ENCODE measurements at regions of chr6 and their contacts with region 1.

Region 1: GRCh38 chr6:165659945-165660862 is 2.8 kb downstream of the PDE10A start:
- DNase-seq: no peak
- H3K4me3 Mint-ChIP-seq: no peak overlapping the region
- H3K27ac Mint-ChIP-seq: no peak overlapping the region
- H3K4me1 Mint-ChIP-seq: no peaks in the 10 kb centered on the region
- H3K27me3 Mint-ChIP-seq: peaks cover 33% of the 10 kb centered on the region

Region 2: GRCh38 chr6:165649166-165650137 is 10.8 kb before region 1 on chr6:
- CTCF ChIA-PET with region 1: no interaction called
- POLR2A ChIA-PET with region 1: no interaction called
- intact Hi-C with region 1: loop called (anchors 1 kb)
- DNase-seq: no peak
- H3K4me3 Mint-ChIP-seq: no peak overlapping the region
- H3K27ac Mint-ChIP-seq: no peak overlapping the region
- H3K4me1 Mint-ChIP-seq: no peaks in the 10 kb centered on the region
- H3K27me3 Mint-ChIP-seq: peaks cover 2% of the 10 kb centered on the region

Region 3: DNA sequence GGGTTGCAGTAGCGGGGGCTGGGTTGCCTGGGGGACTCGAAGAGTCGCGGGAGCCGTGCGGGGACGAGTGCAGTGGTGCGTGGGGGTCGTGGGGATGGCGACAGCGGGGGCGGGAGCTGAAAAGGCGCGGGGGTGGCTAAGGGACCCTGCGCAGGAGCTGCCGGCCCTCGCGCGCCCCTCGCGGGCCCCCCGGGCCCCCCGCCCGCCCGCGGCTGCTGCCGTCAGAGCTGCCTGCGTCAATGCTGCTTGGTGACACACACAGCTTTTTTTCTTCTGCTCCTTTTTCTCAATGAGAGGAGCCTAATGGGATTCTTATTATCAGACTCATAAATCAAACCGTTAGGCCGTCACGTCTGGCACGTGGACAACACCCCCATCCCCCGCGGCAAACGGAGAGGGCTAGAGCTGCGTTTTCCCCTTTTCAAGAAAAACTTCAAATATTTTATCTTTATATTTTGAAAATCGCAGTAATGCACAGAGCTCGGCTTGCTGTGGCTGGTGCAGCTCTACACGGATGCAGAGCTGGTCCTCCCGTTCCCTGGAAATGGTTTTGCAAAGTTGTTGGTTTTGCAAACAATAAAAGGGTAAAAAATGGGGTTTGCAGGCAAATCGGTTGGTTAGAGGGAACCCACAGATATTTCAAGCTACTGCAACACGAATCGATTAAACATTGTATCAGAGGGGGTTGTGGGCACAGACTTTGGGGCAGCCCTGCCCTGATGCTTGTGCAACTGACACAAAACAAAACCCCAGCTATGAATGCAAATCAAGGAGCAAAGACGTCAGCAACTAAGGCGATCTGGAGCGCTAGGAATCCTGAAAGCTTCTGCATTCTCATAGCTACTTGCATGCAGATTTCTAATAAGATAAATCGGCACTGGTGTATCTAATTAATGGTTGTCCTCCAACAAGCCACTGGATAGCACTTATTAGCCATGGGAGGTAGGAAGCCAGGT is 346.0 kb after region 1 on chr6:
- CTCF ChIA-PET with region 1: no interaction called
- POLR2A ChIA-PET with region 1: no interaction called
- intact Hi-C with region 1: loop called (anchors 5 kb)
- DNase-seq: no peak
- H3K4me3 Mint-ChIP-seq: no peak overlapping the region
- H3K27ac Mint-ChIP-seq: no peak overlapping the region
- H3K4me1 Mint-ChIP-seq: peaks cover 5% of the 10 kb centered on the region
- H3K27me3 Mint-ChIP-seq: peaks cover 59% of the 10 kb centered on the region

Measured in activated CD4-positive, alpha-beta memory T cell treated with anti-CD3 and anti-CD28 coated beads for 36 hours (primary cell).